ENCODE measurements at regions of chr22 and their contacts with region 1.

Region 1: GRCh38 chr22:27576815-27577573 is 224.6 kb downstream of the MN1 start:
- DNase-seq: no peak
- H3K4me3 ChIP-seq: no peak overlapping the region
- H3K27ac ChIP-seq: no peak overlapping the region
- H3K4me1 ChIP-seq: peaks cover 16% of the 10 kb centered on the region
- H3K27me3 ChIP-seq: no peaks in the 10 kb centered on the region
- CTCF ChIP-seq: no peak
- POLR2A ChIP-seq: no peak

Region 2: GRCh38 chr22:26008587-26008986 is 1568.4 kb before region 1 on chr22:
- intact Hi-C with region 1: loop called (anchors 5 kb)
- DNase-seq: no peak
- H3K4me3 ChIP-seq: no peak overlapping the region
- H3K27ac ChIP-seq: no peak overlapping the region
- H3K4me1 ChIP-seq: no peaks in the 10 kb centered on the region
- H3K27me3 ChIP-seq: no peaks in the 10 kb centered on the region
- CTCF ChIP-seq: no peak
- POLR2A ChIP-seq: no peak

Region 3: DNA sequence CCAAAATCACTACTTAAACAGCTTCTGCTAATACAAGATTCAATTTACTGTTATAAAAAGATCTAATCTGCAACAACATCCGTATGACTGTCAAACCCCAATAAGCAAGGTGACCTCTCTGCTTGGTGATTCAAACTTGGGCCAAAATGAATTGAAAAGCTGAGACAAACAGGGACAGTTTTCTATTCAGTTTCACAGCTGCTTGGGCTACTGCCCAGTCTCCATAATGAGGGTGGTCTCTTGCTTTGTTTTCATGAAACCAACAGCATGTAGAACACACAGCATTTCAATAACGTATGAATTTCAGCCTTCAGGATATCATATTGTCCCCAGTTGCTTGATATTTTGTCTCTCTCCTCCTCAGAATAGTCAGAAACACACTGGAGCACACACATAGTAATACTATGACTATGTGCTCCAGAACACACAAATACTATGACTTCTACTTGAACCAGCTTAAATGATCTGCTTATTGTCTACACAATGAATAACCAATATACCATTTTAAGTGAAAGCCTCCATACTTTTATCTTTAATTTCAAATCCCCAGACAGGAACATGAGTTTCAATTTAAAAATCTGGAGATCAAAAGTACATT is 817.6 kb after region 1 on chr22:
- intact Hi-C with region 1: no loop called
- DNase-seq: no peak
- H3K4me3 ChIP-seq: no peak overlapping the region
- H3K27ac ChIP-seq: no peak overlapping the region
- H3K4me1 ChIP-seq: no peaks in the 10 kb centered on the region
- H3K27me3 ChIP-seq: no peaks in the 10 kb centered on the region
- CTCF ChIP-seq: no peak
- POLR2A ChIP-seq: no peak